Posterior vena cava (tissue), 2 donors: ENCODE measurements at regions of chr10 and their contacts with region 1.

Region 1: DNA sequence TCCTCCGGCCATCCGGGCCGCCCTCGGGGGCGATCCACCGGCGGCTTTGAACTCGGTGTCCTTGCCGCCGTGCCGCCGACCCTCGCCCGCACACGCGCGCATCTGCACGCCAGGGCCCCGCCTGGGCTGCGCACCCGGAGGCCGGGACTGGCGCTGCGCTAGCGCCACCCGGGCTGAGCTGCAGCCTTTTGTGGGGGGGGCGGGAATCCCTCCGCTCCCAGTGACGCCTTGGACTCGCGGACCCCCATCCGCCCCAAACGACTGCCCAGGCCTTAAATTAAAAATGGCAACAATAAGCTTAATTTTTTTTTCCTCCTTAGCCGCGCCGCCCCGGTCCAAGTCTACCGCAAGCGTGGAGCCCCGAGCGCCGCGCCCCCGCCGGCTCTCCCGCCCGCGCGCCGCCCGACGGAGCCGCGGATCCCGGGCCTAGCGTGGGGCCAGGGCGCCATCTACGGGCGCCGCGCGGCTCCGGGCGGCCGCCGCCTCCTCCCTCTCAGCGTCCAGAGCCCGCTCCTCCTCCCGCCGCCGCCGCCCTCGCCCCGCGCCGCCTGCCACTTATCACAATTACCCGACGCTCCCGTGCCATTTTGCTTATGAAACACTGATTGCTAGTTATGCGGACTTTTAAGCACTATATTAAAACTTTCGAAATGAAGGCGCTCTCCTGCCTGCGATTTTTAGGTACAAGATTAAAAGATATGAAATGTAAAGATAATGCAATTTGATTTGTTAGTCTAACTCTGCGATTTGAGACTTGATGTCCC is 7.5 kb upstream of the EBF3 start:
- DNase-seq: peak; percentile 88

Region 2: GRCh38 chr10:129030996-129031843 is 940.3 kb before region 1 on chr10:
- intact Hi-C with region 1: loop called (anchors 5 kb)
- DNase-seq: no peak

Region 3: DNA sequence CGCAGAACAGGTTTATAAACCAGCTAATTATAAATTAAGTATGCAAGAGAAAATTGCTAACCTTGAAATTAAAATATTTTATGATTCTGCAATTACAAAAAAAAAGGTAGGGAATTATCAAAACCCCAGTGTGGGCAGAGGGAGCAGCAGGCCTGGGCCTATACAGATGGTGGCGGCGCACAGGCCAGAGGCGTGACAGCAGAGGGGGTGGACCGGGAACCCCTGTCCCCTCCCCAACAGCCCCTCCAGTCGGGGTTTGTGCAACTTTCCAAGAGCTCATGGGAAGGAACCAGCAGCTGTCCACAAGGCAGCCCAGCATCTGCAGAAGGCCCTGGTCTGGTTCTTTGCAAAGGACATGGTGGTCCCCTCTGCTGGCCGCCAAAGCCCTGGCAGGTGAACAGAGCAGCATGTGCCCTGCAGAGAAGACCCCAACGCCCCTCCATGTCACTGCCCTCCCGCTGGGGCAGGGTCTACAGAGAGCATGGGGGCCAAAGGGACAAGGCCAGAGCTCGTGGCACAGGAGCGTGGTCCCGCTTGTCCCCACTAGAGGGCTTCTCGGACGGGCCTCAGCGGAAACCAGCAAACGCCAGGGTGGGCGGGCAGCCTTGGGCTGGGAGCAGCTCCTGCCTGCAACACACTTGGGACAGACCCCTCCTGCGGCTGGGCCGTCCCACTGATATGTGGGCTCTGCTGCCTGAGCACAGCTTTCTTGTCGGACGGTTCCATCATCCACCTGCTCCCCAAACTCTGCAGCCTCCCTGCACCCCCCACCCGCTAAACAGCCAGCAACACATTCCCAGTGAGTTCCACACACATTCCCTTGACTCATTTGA is 82.6 kb before region 1 on chr10:
- intact Hi-C with region 1: loop called in 1 of 2 experiments (anchors 5 kb)
- DNase-seq: peak; percentile 87

Region 4: DNA sequence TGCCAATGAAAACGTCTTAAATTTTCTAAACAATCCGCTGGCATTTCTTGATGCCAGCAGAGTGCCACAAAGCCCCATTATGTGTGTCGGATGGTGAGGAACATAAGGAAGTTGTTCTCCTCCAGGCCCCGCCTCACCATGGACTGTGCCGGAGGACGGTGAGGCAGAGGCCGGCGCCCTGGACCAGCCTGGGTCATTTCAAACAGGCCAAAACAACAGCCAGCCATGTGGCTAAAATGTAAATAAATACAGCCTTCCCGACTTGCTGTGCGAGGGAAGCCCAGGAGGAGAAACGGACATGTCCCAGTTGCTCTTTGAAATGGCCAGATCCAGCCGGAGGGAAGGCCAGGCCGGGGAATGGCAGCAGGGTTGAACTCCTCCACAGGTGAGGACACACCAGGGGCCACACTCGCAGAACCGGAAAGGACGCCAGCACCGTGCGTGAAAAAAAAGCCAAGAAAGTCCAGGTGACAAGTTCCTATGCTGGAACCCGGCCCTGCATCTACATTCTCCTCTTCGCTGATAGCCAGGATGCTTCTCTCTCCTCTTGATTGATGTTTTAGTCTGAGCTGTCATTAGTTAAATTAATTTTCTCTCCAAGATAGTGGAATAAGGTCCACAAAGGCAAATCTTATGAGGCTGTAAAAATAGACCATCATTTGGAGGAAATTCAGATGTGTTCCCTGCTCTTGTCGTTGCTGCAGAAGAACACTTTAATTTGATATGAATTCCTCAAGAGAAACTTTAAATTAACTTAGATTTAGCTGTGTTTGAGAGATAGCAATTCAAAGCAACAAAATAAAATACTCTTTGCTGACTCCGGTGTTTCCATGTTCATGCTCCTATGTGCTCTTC is 72.1 kb before region 1 on chr10:
- intact Hi-C with region 1: no loop called
- DNase-seq: no peak